Right ventricle myocardium inferior (tissue), 1 donor: ENCODE measurements at regions of chr17 and their contacts with region 1.

Region 1: GRCh38 chr17:78128551-78129350 is at the start of gene TMC6:
- DNase-seq: peak; percentile 85
- ATAC-seq: peak; percentile 27
- total RNA-seq, gene TMC6: 77.0 TPM

Region 2: DNA sequence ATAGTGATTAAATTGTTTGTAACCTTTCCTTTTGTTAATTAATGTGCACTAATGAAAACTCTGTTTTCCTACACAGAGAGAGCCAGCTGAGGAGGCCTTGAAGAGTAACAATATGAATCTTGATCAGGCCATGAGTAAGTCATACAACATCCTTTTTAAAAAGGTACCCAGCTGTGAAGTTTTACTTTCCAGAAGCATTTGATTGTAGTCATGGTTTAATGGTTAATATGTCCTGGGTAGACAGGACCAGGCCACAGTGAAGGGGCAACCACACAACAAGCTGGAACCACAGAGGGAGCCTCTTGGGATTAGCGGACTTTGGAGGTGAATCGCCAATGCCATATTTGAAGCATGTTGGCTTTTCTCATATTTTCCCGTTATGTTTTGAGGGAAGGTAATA is 55.8 kb before region 1 on chr17:
- intact Hi-C with region 1: no loop called
- DNase-seq: no peak
- ATAC-seq: no peak

Region 3: GRCh38 chr17:78176548-78177025 is 47.8 kb after region 1 on chr17:
- intact Hi-C with region 1: loop called (anchors 5 kb)
- DNase-seq: peak; percentile 91
- ATAC-seq: peak; percentile 18